ENCODE measurements at regions of chr1 and their contacts with region 1.

Region 1: DNA sequence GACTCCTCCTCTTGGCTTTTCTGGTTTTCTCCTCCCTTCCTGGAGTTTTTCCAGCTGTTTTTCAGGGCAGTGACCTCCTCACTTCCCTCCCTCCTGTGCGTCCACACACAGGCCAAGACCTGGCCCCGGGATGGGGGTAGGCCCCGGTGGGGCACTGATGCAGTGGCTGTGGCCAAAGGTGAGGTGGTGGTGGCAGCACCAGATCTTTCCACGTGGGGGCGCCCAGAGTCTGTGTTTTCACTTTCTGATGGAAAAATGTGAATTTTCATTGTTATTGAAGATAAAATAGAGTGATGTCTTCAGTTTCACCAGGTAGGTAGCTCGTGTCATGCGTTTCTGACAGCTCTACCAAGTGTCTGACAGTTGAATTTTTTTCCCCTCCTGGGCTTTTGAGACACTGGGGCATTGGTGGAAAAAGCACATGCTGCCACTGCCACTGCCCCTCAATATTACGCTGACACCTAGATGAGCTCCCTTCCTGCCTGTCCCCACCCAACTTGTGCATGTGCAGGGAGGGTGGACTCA is 39.9 kb upstream of the MAGOH start:
- DNase-seq: peak; percentile 17 to 65
- ATAC-seq: peak; percentile 70 to 79; a peak in 5 of 6 replicates
- H3K4me3 ChIP-seq: no peak overlapping the region
- H3K27ac ChIP-seq: no peak overlapping the region
- H3K4me1 ChIP-seq: no peaks in the 10 kb centered on the region
- CTCF ChIP-seq: peak; percentile 76
- EP300 ChIP-seq: no peak
- POLR2A ChIP-seq: no peak
- RAD21 ChIP-seq: peak; percentile 73 to 81

Region 2: DNA sequence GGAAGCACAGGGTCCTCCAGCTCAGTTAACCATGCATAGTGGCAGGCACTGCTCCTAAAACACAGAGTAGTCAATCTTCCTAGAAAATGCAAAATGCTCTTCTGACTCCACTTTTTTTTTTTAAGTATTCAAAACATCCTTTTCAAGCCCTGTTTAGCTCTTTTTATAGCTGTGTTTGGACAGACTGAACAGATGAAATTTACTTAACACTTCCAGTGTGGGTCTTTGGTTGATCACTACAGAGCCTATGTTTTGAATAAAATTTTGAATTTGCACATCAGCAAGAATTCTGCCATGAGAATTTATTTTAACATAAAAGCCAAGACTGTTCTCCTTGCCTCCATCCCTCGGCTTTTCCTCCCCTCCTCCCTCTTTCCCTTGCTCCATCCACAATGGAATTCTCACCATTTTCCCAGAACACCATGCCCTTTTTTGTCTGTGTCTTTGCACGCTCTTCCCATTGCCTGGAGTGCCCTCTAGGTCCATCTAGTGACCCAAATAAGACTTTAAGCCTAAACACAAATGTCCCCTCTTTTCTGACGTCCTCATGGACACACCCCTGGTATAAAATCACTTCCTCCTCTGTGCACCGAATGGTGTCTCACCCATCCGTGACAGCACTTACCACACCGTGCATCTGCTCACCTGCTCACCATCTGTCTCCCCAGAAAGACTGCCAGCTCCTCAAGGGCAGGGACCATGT is 105.7 kb before region 1 on chr1:
- CTCF ChIA-PET with region 1: no interaction called
- POLR2A ChIA-PET with region 1: no interaction called
- DNase-seq: peak; percentile 59 to 86
- ATAC-seq: peak; percentile 65 to 83
- H3K4me3 ChIP-seq: no peak overlapping the region
- H3K27ac ChIP-seq: peak overlapping the region; percentile 67 to 76
- H3K4me1 ChIP-seq: peaks cover 37% of the 10 kb centered on the region
- CTCF ChIP-seq: peak; percentile 45
- EP300 ChIP-seq: no peak
- POLR2A ChIP-seq: no peak
- RAD21 ChIP-seq: peak; percentile 71

Region 3: DNA sequence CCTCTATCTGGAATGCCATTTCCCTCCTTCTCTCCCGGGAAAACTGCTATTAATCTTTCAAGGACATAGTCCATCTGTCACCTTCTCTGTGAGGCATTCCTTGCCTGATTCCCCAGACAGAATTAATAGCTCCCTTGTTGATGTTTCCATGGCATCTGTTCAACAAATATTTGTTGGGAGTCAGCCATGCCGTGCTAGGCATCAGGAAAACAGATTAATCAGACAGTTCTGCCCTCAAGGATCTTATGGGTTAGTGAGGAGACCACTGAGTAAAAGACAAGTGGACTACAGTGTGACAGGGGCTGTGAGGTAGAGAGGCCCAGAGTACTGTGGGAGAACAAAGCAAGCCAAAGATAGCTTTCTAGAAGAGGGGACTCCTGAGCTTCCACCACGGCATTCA is 28.6 kb before region 1 on chr1:
- CTCF ChIA-PET with region 1: interaction called, 15 read pairs
- POLR2A ChIA-PET with region 1: no interaction called
- DNase-seq: no peak
- ATAC-seq: no peak
- H3K4me3 ChIP-seq: no peak overlapping the region
- H3K27ac ChIP-seq: no peak overlapping the region
- H3K4me1 ChIP-seq: no peaks in the 10 kb centered on the region
- CTCF ChIP-seq: no peak
- EP300 ChIP-seq: no peak
- POLR2A ChIP-seq: no peak
- RAD21 ChIP-seq: no peak

Region 4: DNA sequence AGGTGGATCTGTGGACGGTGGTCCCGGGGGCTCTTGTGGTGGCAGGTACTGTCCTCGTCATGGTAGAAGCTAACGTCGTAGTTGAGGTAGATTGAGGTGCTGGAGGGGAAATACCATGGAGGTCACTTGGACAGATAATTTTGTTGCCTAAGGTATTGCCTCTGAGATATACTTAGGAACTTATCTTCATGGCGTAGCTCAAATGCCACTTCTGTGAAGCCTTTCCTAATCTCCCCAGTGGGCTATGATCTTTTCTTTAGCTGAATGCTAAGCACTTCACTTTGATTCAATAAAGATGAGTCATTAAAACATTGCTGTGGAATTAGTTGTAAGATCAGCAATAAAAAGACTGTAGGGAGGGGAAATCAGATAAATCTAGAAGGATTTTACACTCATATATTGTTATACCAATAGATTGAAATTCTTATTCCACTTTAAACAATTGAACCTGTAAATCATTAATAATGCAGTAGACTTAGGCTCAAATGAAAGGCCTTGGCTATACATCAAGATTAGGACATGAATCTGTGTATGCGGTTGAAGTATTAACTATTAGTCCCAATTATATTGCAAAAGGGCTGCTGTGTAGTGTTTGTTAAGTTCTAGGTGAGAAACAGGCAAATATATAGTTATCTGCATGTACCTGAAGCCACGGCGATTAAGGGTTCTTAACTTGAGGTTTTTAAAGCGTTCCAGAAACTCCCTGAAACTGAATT is 20.7 kb before region 1 on chr1:
- CTCF ChIA-PET with region 1: interaction called, 15 read pairs
- POLR2A ChIA-PET with region 1: no interaction called
- DNase-seq: no peak
- ATAC-seq: no peak
- H3K4me3 ChIP-seq: no peak overlapping the region
- H3K27ac ChIP-seq: no peak overlapping the region
- H3K4me1 ChIP-seq: no peaks in the 10 kb centered on the region
- CTCF ChIP-seq: no peak
- EP300 ChIP-seq: no peak
- POLR2A ChIP-seq: no peak
- RAD21 ChIP-seq: no peak

Region 5: GRCh38 chr1:53266106-53266505 is 12.2 kb before region 1 on chr1:
- CTCF ChIA-PET with region 1: interaction called, 21 read pairs
- POLR2A ChIA-PET with region 1: no interaction called
- DNase-seq: peak in 1 of 2 experiments; percentile 33
- ATAC-seq: peak; percentile 80 to 84; a peak in 5 of 6 replicates
- H3K4me3 ChIP-seq: no peak overlapping the region
- H3K27ac ChIP-seq: no peak overlapping the region
- H3K4me1 ChIP-seq: no peaks in the 10 kb centered on the region
- CTCF ChIP-seq: 0 out of 3 replicates have a peak, but pooled peaks have one; percentile 22
- EP300 ChIP-seq: no peak
- POLR2A ChIP-seq: no peak
- RAD21 ChIP-seq: peak; percentile 33 to 45; a peak in 4 of 5 replicates

Region 6: GRCh38 chr1:53296117-53296749 is 18.0 kb after region 1 on chr1:
- CTCF ChIA-PET with region 1: interaction called, 39 read pairs
- POLR2A ChIA-PET with region 1: no interaction called
- DNase-seq: no peak
- ATAC-seq: 0 out of 6 replicates have a peak, but pooled peaks of 1 of the 2 experiments have one; percentile 5
- H3K4me3 ChIP-seq: no peak overlapping the region
- H3K27ac ChIP-seq: no peak overlapping the region
- H3K4me1 ChIP-seq: peaks cover 15% of the 10 kb centered on the region
- CTCF ChIP-seq: no peak
- EP300 ChIP-seq: no peak
- POLR2A ChIP-seq: no peak
- RAD21 ChIP-seq: no peak

Region 7: GRCh38 chr1:53381790-53382401 is 103.6 kb after region 1 on chr1:
- CTCF ChIA-PET with region 1: interaction called, 244 read pairs
- POLR2A ChIA-PET with region 1: no interaction called
- DNase-seq: peak; percentile 13 to 43
- ATAC-seq: peak; percentile 55 to 76; a peak in 4 of 6 replicates
- H3K4me3 ChIP-seq: no peak overlapping the region
- H3K27ac ChIP-seq: 0 out of 6 replicates have a peak overlapping the region, but pooled peaks of 1 of the 2 experiments have one; percentile 37
- H3K4me1 ChIP-seq: peaks cover 11% of the 10 kb centered on the region; the same call in 2 of the 3 replicates
- CTCF ChIP-seq: no peak
- EP300 ChIP-seq: no peak
- POLR2A ChIP-seq: no peak
- RAD21 ChIP-seq: no peak

Region 8: GRCh38 chr1:53401813-53402745 is 123.8 kb after region 1 on chr1:
- CTCF ChIA-PET with region 1: interaction called, 244 read pairs
- POLR2A ChIA-PET with region 1: no interaction called
- DNase-seq: no peak
- ATAC-seq: no peak
- H3K4me3 ChIP-seq: no peak overlapping the region
- H3K27ac ChIP-seq: no peak overlapping the region
- H3K4me1 ChIP-seq: no peaks in the 10 kb centered on the region
- CTCF ChIP-seq: no peak
- EP300 ChIP-seq: no peak
- POLR2A ChIP-seq: no peak
- RAD21 ChIP-seq: no peak

Measured in A549 (cell line).